HepG2 (cell line): ENCODE measurements at regions of chr6 and their contacts with region 1.

Region 1: GRCh38 chr6:129709769-129710449 is at the start of gene ARHGAP18:
- DNase-seq: peak; percentile 97
- ATAC-seq: peak; percentile 97
- H3K4me3 ChIP-seq: peak within 1 kb of the TSS; percentile 67 to 84 (median 78)
- H3K27ac ChIP-seq: peak within 1 kb of the TSS; percentile 68
- H3K4me1 ChIP-seq: peaks cover 46% of the 10 kb centered on the region
- H3K27me3 ChIP-seq: no peaks in the 10 kb centered on the region; a peak in 1 of 5 replicates
- CTCF ChIP-seq: 0 out of 2 replicates have a peak, but pooled peaks have one; percentile 25
- EP300 ChIP-seq: peak in 1 of 2 experiments; percentile 63; a peak in 2 of 4 replicates
- POLR2A ChIP-seq: peak; percentile 92 to 98
- RAD21 ChIP-seq: peak; percentile 16; the same call in 1 of the 2 replicates
- total RNA-seq, gene ARHGAP18: 115 and 183 TPM in 2 replicates

Region 2: GRCh38 chr6:129084406-129084805 is 625.5 kb before region 1 on chr6:
- CTCF ChIA-PET with region 1: no interaction called
- POLR2A ChIA-PET with region 1: no interaction called
- in situ Hi-C with region 1: no loop called
- intact Hi-C with region 1: no loop called
- DNase-seq: no peak
- ATAC-seq: no peak
- H3K4me3 ChIP-seq: no peak overlapping the region
- H3K27ac ChIP-seq: no peak overlapping the region
- H3K4me1 ChIP-seq: no peaks in the 10 kb centered on the region
- H3K27me3 ChIP-seq: no peaks in the 10 kb centered on the region
- CTCF ChIP-seq: no peak
- EP300 ChIP-seq: no peak
- POLR2A ChIP-seq: no peak
- RAD21 ChIP-seq: no peak

Region 3: GRCh38 chr6:129621247-129621646 is 88.7 kb before region 1 on chr6:
- CTCF ChIA-PET with region 1: no interaction called
- POLR2A ChIA-PET with region 1: no interaction called
- in situ Hi-C with region 1: no loop called
- intact Hi-C with region 1: no loop called
- DNase-seq: peak; percentile 58
- ATAC-seq: peak; percentile 92
- H3K4me3 ChIP-seq: no peak overlapping the region
- H3K27ac ChIP-seq: no peak overlapping the region
- H3K4me1 ChIP-seq: no peaks in the 10 kb centered on the region
- H3K27me3 ChIP-seq: no peaks in the 10 kb centered on the region
- CTCF ChIP-seq: peak; percentile 67
- EP300 ChIP-seq: no peak
- POLR2A ChIP-seq: no peak
- RAD21 ChIP-seq: peak; percentile 66

Region 4: DNA sequence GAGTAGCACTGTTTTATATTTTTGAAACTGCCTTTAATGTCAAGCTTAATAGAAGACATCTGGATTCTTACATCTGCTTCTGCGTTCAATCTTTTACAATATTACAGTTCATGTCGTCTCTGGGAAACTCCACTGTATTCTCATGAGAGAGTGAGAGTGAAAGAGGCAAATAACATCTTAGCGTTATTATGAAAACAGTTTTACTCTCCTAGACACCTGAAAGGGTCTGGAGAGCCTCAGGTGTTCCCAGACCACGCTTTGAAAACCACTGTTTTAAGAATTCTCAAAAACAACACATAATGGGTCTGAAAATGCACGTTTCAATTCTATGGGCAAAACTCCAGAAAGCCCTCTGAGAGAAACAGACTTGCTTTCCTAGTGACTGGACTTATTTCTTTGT is 63.3 kb before region 1 on chr6:
- CTCF ChIA-PET with region 1: no interaction called
- POLR2A ChIA-PET with region 1: interaction called, 11 read pairs
- in situ Hi-C with region 1: no loop called
- intact Hi-C with region 1: loop called (anchors 5 kb)
- DNase-seq: no peak
- ATAC-seq: no peak
- H3K4me3 ChIP-seq: no peak overlapping the region
- H3K27ac ChIP-seq: peak overlapping the region; percentile 68
- H3K4me1 ChIP-seq: peaks cover 91% of the 10 kb centered on the region
- H3K27me3 ChIP-seq: no peaks in the 10 kb centered on the region
- CTCF ChIP-seq: no peak
- EP300 ChIP-seq: no peak
- POLR2A ChIP-seq: no peak
- RAD21 ChIP-seq: no peak

Region 5: DNA sequence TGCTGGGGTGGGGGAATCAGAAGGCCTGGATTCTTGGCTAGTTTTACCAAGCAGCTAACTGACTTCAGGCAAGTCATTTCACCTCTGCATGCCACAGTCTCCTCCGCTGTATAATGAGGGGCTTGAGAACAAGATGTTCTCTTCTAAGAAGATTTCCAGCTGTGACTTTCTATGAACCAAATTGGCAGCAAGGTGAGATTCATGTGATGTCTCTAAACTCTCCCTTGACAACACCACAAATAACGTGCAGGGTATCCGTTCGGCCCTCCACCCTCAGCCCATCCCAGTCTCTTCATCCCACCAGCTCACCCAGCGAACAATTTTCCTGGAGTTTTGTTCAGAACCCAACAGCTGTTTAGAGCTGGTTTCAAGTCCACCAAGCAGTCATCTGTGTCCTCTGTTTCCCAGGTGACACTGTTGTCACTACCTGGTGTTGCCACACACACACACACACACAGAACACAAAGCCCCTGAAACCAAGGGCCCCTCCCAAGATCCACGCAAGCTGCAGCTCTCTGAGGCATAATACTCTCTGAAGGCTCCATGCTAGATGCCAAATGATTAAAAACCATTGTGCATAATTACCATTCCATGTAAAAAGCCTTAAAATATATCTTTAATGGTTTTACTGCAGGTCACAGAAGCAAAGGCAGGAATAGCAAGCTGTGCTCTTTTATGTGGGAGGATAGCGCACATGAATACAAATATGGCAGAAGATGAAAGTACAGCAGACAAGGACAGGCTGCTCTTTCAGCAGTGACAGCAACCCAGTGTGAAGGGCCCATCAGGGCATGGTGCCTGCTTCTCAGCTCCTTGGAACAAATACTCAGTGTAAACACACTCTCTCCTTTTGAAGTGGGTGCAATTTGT is 48.1 kb before region 1 on chr6:
- CTCF ChIA-PET with region 1: no interaction called
- POLR2A ChIA-PET with region 1: interaction called, 24 read pairs
- in situ Hi-C with region 1: no loop called
- intact Hi-C with region 1: no loop called
- DNase-seq: peak; percentile 66
- ATAC-seq: peak; percentile 86
- H3K4me3 ChIP-seq: no peak overlapping the region
- H3K27ac ChIP-seq: peak overlapping the region; percentile 65
- H3K4me1 ChIP-seq: peaks cover 85% of the 10 kb centered on the region
- H3K27me3 ChIP-seq: no peaks in the 10 kb centered on the region
- CTCF ChIP-seq: no peak
- EP300 ChIP-seq: peak in 1 of 2 experiments; percentile 51; a peak in 3 of 4 replicates
- POLR2A ChIP-seq: no peak
- RAD21 ChIP-seq: no peak

Region 6: DNA sequence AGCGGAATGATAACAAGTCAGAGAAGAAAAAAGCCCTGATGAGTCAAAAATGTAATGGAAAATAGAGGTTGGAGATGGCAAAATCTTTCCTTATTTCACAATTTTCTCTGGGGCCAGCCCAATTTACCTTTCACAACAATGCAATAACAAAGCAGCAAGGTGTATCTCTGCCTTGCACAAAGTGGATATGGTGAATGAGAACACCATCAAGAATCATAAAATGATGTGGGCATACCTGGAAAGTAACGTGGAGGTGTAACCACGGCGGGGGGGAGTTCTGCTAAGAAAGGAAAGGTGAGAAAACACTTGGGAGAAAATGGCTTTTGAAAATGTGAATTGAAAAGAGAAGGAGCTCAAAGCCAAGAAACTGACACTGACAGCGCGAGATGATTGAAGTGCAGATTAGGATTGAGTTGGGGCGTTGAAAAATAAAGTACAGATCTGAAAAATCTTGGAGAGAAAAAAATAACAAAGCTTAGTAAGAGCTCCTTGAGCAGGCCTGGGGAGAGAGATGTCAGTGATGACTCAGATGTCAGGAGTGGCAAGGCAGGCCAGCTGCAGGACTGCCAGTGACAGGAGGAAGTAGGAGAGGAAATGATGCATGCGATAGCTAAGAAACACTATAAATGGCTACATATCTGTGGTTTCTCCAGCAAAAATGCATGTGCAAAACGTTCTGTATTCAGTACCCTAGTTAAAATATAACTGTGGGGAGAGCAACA is 26.1 kb before region 1 on chr6:
- CTCF ChIA-PET with region 1: no interaction called
- POLR2A ChIA-PET with region 1: interaction called, 24 read pairs
- in situ Hi-C with region 1: no loop called
- intact Hi-C with region 1: no loop called
- DNase-seq: peak; percentile 96
- ATAC-seq: peak; percentile 87
- H3K4me3 ChIP-seq: no peak overlapping the region; a peak in 1 of 6 replicates
- H3K27ac ChIP-seq: peak overlapping the region; percentile 70
- H3K4me1 ChIP-seq: peaks cover 97% of the 10 kb centered on the region
- H3K27me3 ChIP-seq: no peaks in the 10 kb centered on the region
- CTCF ChIP-seq: no peak
- EP300 ChIP-seq: peak in 1 of 2 experiments; percentile 67; a peak in 3 of 4 replicates
- POLR2A ChIP-seq: peak; percentile 31 to 58; a peak in 1 of 4 replicates
- RAD21 ChIP-seq: no peak

Region 7: DNA sequence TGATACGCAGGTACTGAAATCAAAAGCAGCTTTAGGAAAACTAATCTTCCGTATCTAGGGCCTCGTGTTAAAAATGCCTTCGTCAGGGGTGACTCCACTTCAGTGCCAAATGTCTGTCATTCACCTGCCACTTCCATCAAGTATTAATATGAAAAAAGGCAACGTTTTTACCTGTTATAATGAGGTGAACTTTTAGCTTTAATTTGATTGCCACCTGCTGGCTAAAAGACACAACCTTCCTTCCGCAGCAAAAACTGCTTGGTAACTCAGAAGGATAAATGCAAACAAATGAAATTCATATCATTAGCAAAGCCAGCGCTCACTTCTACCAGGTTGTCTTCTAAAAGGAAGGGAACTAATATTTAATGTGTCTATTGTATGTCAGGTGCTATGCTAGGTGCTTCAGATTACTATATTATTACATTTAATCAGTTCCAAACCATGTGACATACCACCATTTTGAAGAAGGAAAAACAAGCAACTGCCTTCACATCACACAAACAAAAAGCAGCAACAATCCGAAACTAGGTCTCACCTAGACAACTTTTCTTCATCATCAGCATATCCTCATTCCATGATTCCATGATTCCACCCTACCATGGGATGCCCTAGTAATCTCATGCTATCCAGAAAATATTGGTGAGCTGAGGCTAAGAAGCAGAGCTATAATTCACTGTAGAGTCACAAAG is 20.7 kb after region 1 on chr6:
- CTCF ChIA-PET with region 1: no interaction called
- POLR2A ChIA-PET with region 1: interaction called, 13 read pairs
- in situ Hi-C with region 1: no loop called
- intact Hi-C with region 1: no loop called
- DNase-seq: peak; percentile 58
- ATAC-seq: peak; percentile 77
- H3K4me3 ChIP-seq: peak overlapping the region in 1 of 3 experiments; percentile 17; a peak in 1 of 6 replicates
- H3K27ac ChIP-seq: no peak overlapping the region
- H3K4me1 ChIP-seq: peaks cover 36% of the 10 kb centered on the region
- H3K27me3 ChIP-seq: no peaks in the 10 kb centered on the region
- CTCF ChIP-seq: peak; percentile 87
- EP300 ChIP-seq: no peak
- POLR2A ChIP-seq: no peak
- RAD21 ChIP-seq: peak; percentile 92